ENCODE measurements at regions of chr10 and their contacts with region 1.

Region 1: GRCh38 chr10:103918053-103918846 is at the start of gene STN1:
- DNase-seq: peak; percentile 98
- ATAC-seq: peak; percentile 93
- H3K4me3 Mint-ChIP-seq: peak within 1 kb of the TSS; percentile 96
- H3K27ac Mint-ChIP-seq: peak within 1 kb of the TSS; percentile 99
- H3K4me1 Mint-ChIP-seq: peaks cover 32% of the 10 kb centered on the region
- H3K27me3 Mint-ChIP-seq: no peaks in the 10 kb centered on the region
- total RNA-seq, gene STN1: 34.4 to 37.4 TPM

Region 2: GRCh38 chr10:104231784-104232612 is 313.7 kb after region 1 on chr10 and contains the start of gene CFAP43:
- CTCF ChIA-PET with region 1: no interaction called
- POLR2A ChIA-PET with region 1: no interaction called
- intact Hi-C with region 1: loop called in 1 of 2 experiments (anchors 1 kb)
- DNase-seq: peak; percentile 100
- ATAC-seq: peak; percentile 100
- H3K4me3 Mint-ChIP-seq: peak within 1 kb of the TSS; percentile 78
- H3K27ac Mint-ChIP-seq: peak within 1 kb of the TSS; percentile 21
- H3K4me1 Mint-ChIP-seq: peaks cover 5% of the 10 kb centered on the region
- H3K27me3 Mint-ChIP-seq: peaks cover 13% of the 10 kb centered on the region
- total RNA-seq, gene CFAP43: 0.09 TPM

Region 3: GRCh38 chr10:104337974-104338735 is 419.9 kb after region 1 on chr10 and contains the start of gene ITPRIP:
- CTCF ChIA-PET with region 1: no interaction called
- POLR2A ChIA-PET with region 1: no interaction called
- intact Hi-C with region 1: loop called in 1 of 2 experiments (anchors 5 kb)
- DNase-seq: peak; percentile 82
- ATAC-seq: peak; percentile 78
- H3K4me3 Mint-ChIP-seq: peak within 1 kb of the TSS; percentile 93
- H3K27ac Mint-ChIP-seq: peak within 1 kb of the TSS; percentile 99
- H3K4me1 Mint-ChIP-seq: peaks cover 45% of the 10 kb centered on the region
- H3K27me3 Mint-ChIP-seq: no peaks in the 10 kb centered on the region
- total RNA-seq, gene ITPRIP: 20.3 to 21.6 TPM

Measured in activated CD4-positive, alpha-beta T cell treated with anti-CD3 and anti-CD28 coated beads for 36 hours (primary cell).